ENCODE measurements at regions of chr5 and their contacts with region 1.

Region 1: DNA sequence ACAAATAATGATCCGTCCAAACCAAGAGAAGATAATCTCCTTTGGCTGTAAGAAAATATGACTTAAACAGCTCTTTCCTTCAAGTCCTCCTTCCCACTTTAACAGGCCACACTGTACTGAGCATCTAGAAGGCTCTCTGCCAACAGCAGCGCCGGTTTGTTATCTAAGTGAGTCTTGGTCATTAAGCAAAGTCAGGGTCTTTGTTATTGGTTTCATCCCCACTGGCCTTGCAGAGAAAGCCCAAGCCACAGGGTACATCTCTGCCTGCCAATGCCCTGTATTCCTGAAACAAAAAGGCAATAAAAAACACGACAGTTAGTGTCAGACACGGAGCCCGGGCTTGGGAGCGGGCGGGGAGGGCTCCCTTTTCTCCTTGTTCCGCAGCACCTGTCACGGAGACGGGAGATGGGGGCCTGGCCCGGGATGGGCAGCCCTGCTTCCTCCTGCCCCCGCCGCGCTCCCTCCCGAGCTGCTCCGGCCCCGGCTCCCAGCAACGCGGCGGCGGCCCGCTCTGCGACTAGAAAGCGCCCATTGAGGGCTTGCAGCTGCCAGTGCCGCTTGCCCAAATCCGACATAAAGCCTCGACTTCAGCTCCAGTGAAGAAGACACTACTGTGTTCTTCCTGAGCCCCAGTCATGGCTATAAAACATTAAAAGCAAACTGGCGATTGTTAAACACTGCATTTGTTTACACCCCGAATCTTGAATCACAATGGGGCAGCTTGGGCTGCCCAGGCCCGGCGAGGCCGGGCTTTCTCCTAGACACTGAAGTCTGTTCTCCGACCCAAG is 28.1 kb upstream of the PIK3R1 start:
- DNase-seq: no peak
- ATAC-seq: no peak
- H3K4me3 ChIP-seq: no peak overlapping the region
- H3K4me3 Mint-ChIP-seq: no peak overlapping the region
- H3K27ac ChIP-seq: no peak overlapping the region
- H3K27ac Mint-ChIP-seq: no peak overlapping the region
- H3K4me1 ChIP-seq: no peaks in the 10 kb centered on the region
- H3K4me1 Mint-ChIP-seq: no peaks in the 10 kb centered on the region
- H3K27me3 ChIP-seq: no peaks in the 10 kb centered on the region
- H3K27me3 Mint-ChIP-seq: peaks cover 0 to 3% of the 10 kb centered on the region in 2 donors

Region 2: DNA sequence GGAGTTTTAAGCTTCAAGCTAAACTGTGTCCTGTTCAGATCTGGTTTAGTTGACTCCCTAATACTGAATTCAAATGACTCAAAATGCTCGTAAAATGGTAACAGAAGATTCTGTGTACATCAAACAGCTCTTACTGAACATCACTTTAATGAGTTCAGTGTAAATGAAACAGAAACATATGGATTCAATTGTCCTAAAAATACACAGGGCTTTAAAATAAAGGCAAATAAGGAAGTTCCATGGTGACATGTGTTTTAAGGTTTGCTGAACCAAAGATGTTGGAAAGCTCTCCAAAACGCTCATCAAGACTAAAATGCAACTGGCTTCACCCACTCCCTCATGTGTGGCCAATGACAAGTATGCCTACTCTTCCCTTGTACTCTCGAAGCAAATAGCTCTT is 311.9 kb before region 1 on chr5:
- CTCF ChIA-PET with region 1: no interaction called
- POLR2A ChIA-PET with region 1: no interaction called
- DNase-seq: no peak
- ATAC-seq: no peak
- H3K4me3 ChIP-seq: no peak overlapping the region
- H3K4me3 Mint-ChIP-seq: no peak overlapping the region
- H3K27ac ChIP-seq: no peak overlapping the region
- H3K27ac Mint-ChIP-seq: no peak overlapping the region
- H3K4me1 ChIP-seq: no peaks in the 10 kb centered on the region
- H3K4me1 Mint-ChIP-seq: no peaks in the 10 kb centered on the region
- H3K27me3 ChIP-seq: no peaks in the 10 kb centered on the region
- H3K27me3 Mint-ChIP-seq: peaks cover 7 to 10% of the 10 kb centered on the region in 2 donors

Region 3: GRCh38 chr5:68074053-68074632 is 113.3 kb before region 1 on chr5:
- CTCF ChIA-PET with region 1: no interaction called
- POLR2A ChIA-PET with region 1: interaction called in 1 of 2 experiments, 11 read pairs
- DNase-seq: no peak
- ATAC-seq: no peak
- H3K4me3 ChIP-seq: no peak overlapping the region
- H3K4me3 Mint-ChIP-seq: no peak overlapping the region
- H3K27ac ChIP-seq: no peak overlapping the region
- H3K27ac Mint-ChIP-seq: no peak overlapping the region
- H3K4me1 ChIP-seq: no peaks in the 10 kb centered on the region
- H3K4me1 Mint-ChIP-seq: peaks cover 0 to 2% (median 0%) of the 10 kb centered on the region in 3 donors
- H3K27me3 ChIP-seq: no peaks in the 10 kb centered on the region
- H3K27me3 Mint-ChIP-seq: no peaks in the 10 kb centered on the region

Region 4: DNA sequence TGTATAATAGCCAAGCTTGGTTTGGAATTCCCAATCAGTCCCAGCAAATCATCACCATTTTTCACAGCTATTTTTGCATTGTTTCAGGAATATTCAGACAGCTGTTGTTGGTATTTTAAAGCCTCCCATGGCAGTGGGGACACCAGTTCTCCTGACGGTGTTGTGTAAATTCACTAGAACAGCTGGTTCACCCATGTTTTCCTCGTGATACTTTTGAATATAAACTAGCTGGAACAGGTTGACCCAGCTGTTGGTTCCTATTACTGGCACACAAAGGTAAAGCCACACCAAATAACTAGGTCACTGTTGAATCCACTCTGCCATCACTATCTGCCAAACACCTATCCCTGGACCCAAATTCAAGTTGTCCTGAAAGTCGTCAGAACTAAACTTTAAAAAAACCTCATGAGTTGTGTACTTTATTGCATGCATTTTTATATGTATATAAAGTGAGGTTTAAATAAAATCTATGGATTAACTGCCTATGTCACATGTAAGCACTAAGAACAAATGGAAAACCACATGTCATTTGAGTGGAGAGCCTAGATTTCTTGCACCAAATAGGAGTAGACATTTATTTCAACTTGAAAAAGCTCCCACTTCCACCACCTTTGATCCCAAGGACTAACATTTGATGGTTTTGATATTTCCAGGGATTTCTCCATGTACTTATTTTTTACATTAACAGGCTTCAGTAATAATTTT is 93.9 kb before region 1 on chr5:
- CTCF ChIA-PET with region 1: no interaction called
- POLR2A ChIA-PET with region 1: no interaction called
- DNase-seq: no peak
- ATAC-seq: no peak
- H3K4me3 ChIP-seq: no peak overlapping the region
- H3K4me3 Mint-ChIP-seq: no peak overlapping the region
- H3K27ac ChIP-seq: no peak overlapping the region
- H3K27ac Mint-ChIP-seq: no peak overlapping the region
- H3K4me1 ChIP-seq: no peaks in the 10 kb centered on the region
- H3K4me1 Mint-ChIP-seq: no peaks in the 10 kb centered on the region
- H3K27me3 ChIP-seq: no peaks in the 10 kb centered on the region
- H3K27me3 Mint-ChIP-seq: peaks cover 0 to 5% of the 10 kb centered on the region in 2 donors

Region 5: GRCh38 chr5:68149189-68149588 is 38.3 kb before region 1 on chr5:
- CTCF ChIA-PET with region 1: no interaction called
- POLR2A ChIA-PET with region 1: no interaction called
- DNase-seq: no peak
- ATAC-seq: no peak
- H3K4me3 ChIP-seq: no peak overlapping the region
- H3K4me3 Mint-ChIP-seq: no peak overlapping the region
- H3K27ac ChIP-seq: no peak overlapping the region
- H3K27ac Mint-ChIP-seq: no peak overlapping the region
- H3K4me1 ChIP-seq: no peaks in the 10 kb centered on the region
- H3K4me1 Mint-ChIP-seq: no peaks in the 10 kb centered on the region
- H3K27me3 ChIP-seq: no peaks in the 10 kb centered on the region
- H3K27me3 Mint-ChIP-seq: no peaks in the 10 kb centered on the region

Region 6: GRCh38 chr5:68230285-68230684 is 42.8 kb after region 1 on chr5:
- CTCF ChIA-PET with region 1: no interaction called
- POLR2A ChIA-PET with region 1: interaction called in 1 of 2 experiments, 11 read pairs
- DNase-seq: no peak
- ATAC-seq: no peak
- H3K4me3 ChIP-seq: no peak overlapping the region
- H3K4me3 Mint-ChIP-seq: peak overlapping the region in 1 of 3 donors; percentile 7
- H3K27ac ChIP-seq: no peak overlapping the region
- H3K27ac Mint-ChIP-seq: peak overlapping the region in 1 of 2 donors; percentile 12
- H3K4me1 ChIP-seq: peaks cover 9 to 37% of the 10 kb centered on the region in 2 experiments
- H3K4me1 Mint-ChIP-seq: peaks cover 87 to 91% (median 89%) of the 10 kb centered on the region in 3 donors
- H3K27me3 ChIP-seq: no peaks in the 10 kb centered on the region
- H3K27me3 Mint-ChIP-seq: no peaks in the 10 kb centered on the region

Region 7: DNA sequence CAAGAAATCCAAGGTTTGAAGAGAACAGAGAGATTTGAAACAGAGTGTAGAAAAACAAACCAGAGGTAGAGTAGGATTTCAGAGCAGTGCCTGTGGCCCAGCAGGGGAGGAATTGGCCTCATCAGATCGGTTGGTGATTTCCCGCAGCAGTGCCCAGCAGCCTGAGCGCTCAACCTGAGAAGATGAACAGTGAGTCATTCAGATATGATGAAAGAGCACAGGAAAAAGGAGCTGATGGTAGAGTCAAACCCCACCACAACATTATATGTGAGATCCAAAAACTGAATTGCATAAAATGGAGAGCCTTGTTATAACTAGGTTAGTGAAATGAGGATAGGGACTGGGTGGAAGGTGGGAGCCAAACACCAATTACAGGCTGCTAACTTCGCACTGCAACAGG is 277.0 kb after region 1 on chr5:
- CTCF ChIA-PET with region 1: no interaction called
- POLR2A ChIA-PET with region 1: no interaction called
- DNase-seq: peak in 11 of 35 experiments; percentile 2 to 44 (median 6)
- ATAC-seq: peak; percentile 48 to 74 (median 55)
- H3K4me3 ChIP-seq: no peak overlapping the region
- H3K4me3 Mint-ChIP-seq: no peak overlapping the region
- H3K27ac ChIP-seq: no peak overlapping the region
- H3K27ac Mint-ChIP-seq: no peak overlapping the region
- H3K4me1 ChIP-seq: peaks cover 2 to 16% of the 10 kb centered on the region in 2 experiments
- H3K4me1 Mint-ChIP-seq: peaks cover 0 to 2% (median 2%) of the 10 kb centered on the region in 3 donors
- H3K27me3 ChIP-seq: no peaks in the 10 kb centered on the region
- H3K27me3 Mint-ChIP-seq: no peaks in the 10 kb centered on the region

Measured in T-cell (primary cell).